IMR-90 (cell line): ENCODE measurements at regions of chr1 and their contacts with region 1.

Region 1: GRCh38 chr1:1890506-1891348 is at the start of gene GNB1:
- DNase-seq: peak; percentile 88
- ATAC-seq: peak; percentile 77
- H3K4me3 ChIP-seq: peak within 1 kb of the TSS; percentile 92
- H3K27ac ChIP-seq: peak within 1 kb of the TSS; percentile 96
- H3K4me1 ChIP-seq: peaks cover 11% of the 10 kb centered on the region
- H3K27me3 ChIP-seq: no peaks in the 10 kb centered on the region
- CTCF ChIP-seq: no peak
- POLR2A ChIP-seq: peak; percentile 49
- RAD21 ChIP-seq: no peak
- total RNA-seq, gene GNB1: 73.5 and 74.7 TPM in 2 replicates

Region 2: DNA sequence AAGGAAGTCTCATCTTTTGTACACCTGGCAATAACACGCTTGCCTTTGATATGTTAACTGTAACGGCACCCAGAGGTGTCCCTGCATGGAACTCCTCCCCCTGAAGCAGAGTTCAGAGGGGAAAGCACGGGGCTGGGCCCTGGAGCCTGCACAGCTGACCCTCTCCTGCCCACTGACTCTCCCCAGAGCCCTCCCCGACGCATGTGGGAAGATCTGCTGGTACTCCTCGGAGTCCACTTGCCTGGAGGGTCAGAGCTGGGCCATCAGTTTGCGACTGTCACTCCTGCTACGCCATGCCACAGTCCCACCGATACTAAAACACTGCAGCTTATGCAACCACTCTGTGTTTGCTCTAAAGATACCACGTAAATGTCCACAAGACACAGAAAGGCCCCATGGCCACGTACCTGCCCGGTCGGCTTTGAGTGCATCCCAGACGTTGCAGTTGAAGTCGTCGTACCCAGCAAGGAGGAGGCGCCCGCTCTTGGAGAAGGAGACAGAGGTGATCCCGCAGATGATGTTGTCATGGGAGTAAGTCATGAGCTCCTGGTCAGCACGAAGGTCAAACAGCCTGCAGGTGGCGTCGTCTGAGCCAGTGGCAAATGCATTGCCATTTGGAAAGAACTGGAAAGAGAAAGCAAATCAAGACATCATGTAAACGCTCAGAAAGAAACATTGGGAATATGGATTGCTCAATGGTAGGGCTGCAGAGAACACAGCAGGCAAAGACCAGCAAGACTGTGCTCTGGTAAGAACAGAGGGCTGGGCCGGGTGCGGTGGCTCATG is 101.9 kb before region 1 on chr1:
- CTCF ChIA-PET with region 1: no interaction called
- POLR2A ChIA-PET with region 1: no interaction called
- dilution Hi-C with region 1: no loop called
- in situ Hi-C with region 1: loop called (anchors 10 kb)
- intact Hi-C with region 1: loop called (anchors 5 kb)
- DNase-seq: peak; percentile 42
- ATAC-seq: peak; percentile 25; the same call in 1 of the 2 replicates
- H3K4me3 ChIP-seq: no peak overlapping the region
- H3K27ac ChIP-seq: no peak overlapping the region
- H3K4me1 ChIP-seq: no peaks in the 10 kb centered on the region
- H3K27me3 ChIP-seq: no peaks in the 10 kb centered on the region
- CTCF ChIP-seq: peak; percentile 27
- POLR2A ChIP-seq: no peak
- RAD21 ChIP-seq: no peak

Region 3: DNA sequence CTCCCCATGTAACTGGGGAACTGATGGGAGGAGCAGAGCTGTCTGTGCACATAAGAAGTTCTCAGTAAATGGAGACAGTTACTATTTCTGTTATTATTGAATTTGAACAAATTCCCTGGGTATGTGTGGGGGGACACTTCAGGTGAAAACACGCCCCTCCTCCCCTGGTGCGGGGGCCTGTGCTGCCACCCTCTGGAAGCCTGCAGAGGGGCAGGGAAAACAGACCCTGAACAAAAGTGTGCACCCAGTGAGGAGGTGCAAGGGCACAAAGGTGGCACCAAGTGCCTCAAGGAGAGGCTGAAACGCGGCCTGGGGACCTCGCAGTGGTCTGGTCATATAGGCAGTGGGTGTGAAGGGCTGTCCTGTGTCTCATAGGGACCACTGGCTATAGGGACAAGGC is 94.3 kb before region 1 on chr1:
- CTCF ChIA-PET with region 1: no interaction called
- POLR2A ChIA-PET with region 1: no interaction called
- dilution Hi-C with region 1: no loop called
- in situ Hi-C with region 1: loop called (anchors 10 kb)
- intact Hi-C with region 1: no loop called
- DNase-seq: no peak
- ATAC-seq: no peak
- H3K4me3 ChIP-seq: no peak overlapping the region
- H3K27ac ChIP-seq: no peak overlapping the region
- H3K4me1 ChIP-seq: no peaks in the 10 kb centered on the region
- H3K27me3 ChIP-seq: no peaks in the 10 kb centered on the region
- CTCF ChIP-seq: peak; percentile 14; the same call in 1 of the 2 replicates
- POLR2A ChIP-seq: no peak
- RAD21 ChIP-seq: no peak

Region 4: DNA sequence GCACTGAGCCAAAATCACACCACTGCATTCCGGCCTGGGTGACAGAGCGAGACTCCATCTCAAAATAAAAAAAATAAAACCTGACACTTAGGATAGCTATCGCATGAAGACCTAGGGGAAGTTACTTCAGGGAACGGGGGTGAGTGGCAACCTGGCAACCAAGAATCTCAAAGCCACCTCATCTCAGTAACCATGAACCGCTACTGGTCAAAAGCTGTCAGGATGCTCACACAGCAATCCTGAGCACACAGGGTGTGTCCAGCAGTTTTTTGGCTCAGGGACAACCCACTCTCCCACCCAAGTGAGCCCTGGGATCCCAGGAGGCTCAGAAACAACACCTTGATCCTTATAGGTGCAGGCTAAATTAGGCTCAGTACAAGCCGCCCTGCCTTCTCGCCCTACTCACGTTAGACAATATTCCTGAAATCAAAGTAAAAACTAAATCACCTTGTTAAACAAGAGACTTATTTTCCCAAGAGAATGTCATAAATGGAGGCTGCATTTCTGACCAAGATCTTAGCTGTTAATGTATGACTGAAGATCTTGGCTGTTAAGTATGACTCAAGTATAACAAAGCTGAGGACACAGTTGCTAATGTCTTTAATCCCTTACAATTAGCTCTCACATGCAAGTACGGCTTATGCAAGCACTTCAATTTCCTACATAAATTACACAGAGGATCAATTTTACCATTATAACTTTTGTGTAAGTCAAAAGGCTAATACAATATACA is 64.2 kb before region 1 on chr1:
- CTCF ChIA-PET with region 1: no interaction called
- POLR2A ChIA-PET with region 1: no interaction called
- dilution Hi-C with region 1: loop called (anchors 10 kb)
- in situ Hi-C with region 1: no loop called
- intact Hi-C with region 1: loop called (anchors 5 kb)
- DNase-seq: no peak
- ATAC-seq: peak; percentile 19
- H3K4me3 ChIP-seq: no peak overlapping the region
- H3K27ac ChIP-seq: no peak overlapping the region
- H3K4me1 ChIP-seq: peaks cover 10% of the 10 kb centered on the region
- H3K27me3 ChIP-seq: no peaks in the 10 kb centered on the region
- CTCF ChIP-seq: no peak
- POLR2A ChIP-seq: no peak
- RAD21 ChIP-seq: no peak

Region 5: GRCh38 chr1:1900883-1901640 is 10.3 kb after region 1 on chr1:
- CTCF ChIA-PET with region 1: interaction called, 6 read pairs
- POLR2A ChIA-PET with region 1: interaction called, 46 read pairs
- dilution Hi-C with region 1: no loop called
- in situ Hi-C with region 1: no loop called
- intact Hi-C with region 1: no loop called
- DNase-seq: no peak
- ATAC-seq: no peak
- H3K4me3 ChIP-seq: no peak overlapping the region
- H3K27ac ChIP-seq: no peak overlapping the region
- H3K4me1 ChIP-seq: no peaks in the 10 kb centered on the region
- H3K27me3 ChIP-seq: peaks cover 2% of the 10 kb centered on the region; the same call in 1 of the 2 replicates
- CTCF ChIP-seq: no peak
- POLR2A ChIP-seq: no peak
- RAD21 ChIP-seq: no peak